ENCODE measurements at regions of chr16 and their contacts with region 1.

Region 1: DNA sequence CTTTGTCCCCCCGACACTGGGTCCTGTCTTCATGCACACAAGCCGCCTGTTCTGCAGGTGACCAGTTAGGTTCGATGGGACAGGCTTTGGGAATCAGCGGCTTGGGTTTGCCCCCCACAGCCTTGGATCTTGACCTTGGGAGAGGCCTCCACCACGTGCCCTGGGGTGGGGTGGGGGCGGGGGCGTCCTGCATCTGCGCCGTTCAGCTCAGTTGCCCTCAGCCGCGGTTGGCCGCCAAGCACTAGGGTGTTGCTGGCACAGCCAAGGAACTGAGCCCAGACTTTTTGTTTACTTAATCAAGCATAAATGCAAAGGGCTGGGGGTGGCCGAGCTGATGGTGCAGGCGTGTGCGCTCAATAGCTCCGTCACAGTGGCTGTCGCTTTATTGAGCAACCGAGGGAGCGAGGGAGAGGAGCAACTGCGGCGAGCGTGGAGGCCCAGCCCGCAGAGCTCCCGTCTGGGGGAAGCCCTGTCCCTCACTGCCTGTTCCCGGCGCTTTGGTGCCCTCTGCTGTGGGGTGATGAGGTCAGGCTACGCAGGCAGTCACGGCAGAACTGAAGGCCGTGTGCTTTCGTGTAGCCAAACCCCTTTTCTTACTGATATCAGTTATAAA is 33.9 kb downstream of the JPH3 start:
- DNase-seq: peak; percentile 93
- ATAC-seq: peak; percentile 93
- H3K4me3 Mint-ChIP-seq: peak overlapping the region; percentile 55
- H3K27ac Mint-ChIP-seq: no peak overlapping the region
- H3K4me1 Mint-ChIP-seq: peaks cover 12% of the 10 kb centered on the region
- H3K27me3 Mint-ChIP-seq: peaks cover 10% of the 10 kb centered on the region

Region 2: DNA sequence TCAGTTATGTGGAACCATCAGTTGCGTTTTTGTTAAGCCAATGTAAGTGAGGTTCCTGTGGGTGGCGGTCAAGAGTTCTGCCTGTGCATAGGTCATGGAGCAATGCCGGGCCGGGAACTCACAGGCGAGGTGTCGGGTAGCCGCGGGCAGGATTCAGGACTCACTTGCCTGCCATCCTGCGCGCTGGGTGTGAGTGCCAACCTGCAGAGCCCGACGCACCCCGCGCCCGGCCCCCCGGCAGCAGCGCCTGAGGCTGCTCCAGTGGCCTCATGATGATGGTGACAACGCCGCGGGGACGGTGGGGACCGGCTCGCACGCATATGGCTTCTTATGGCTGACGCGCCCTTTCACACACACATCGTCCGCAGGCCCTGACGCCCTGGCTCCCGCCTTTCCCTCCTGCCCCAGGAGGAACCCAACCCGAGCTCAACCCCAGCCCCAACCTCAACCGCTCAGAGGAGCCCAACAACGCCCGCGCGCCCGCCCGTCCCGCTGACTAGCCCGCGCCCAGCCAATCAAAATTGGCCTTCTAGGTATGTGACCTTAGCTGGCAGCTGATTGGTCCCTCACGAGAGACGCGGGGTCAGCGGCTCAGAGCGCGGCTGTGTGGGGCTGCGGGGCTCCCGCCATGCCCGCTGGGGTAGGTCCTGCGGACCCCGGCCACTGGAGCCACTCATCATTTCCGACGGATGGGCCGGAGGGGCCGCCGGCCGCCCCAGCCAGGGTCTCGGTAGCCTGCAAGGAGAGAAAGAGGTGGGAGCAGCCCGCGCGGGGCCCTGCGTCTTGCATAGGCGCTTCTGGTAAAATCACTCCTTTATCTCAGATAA is 319.0 kb before region 1 on chr16 and contains the start of gene C16orf95:
- CTCF ChIA-PET with region 1: interaction called, 3 read pairs
- POLR2A ChIA-PET with region 1: no interaction called
- intact Hi-C with region 1: loop called in 1 of 2 experiments (anchors 2 kb)
- DNase-seq: peak; percentile 97
- ATAC-seq: peak; percentile 90
- H3K4me3 Mint-ChIP-seq: peak within 1 kb of the TSS; percentile 97
- H3K27ac Mint-ChIP-seq: peak within 1 kb of the TSS; percentile 95
- H3K4me1 Mint-ChIP-seq: peaks cover 11% of the 10 kb centered on the region
- H3K27me3 Mint-ChIP-seq: no peaks in the 10 kb centered on the region
- total RNA-seq, gene C16orf95: 5.6 to 12.8 TPM

Region 3: DNA sequence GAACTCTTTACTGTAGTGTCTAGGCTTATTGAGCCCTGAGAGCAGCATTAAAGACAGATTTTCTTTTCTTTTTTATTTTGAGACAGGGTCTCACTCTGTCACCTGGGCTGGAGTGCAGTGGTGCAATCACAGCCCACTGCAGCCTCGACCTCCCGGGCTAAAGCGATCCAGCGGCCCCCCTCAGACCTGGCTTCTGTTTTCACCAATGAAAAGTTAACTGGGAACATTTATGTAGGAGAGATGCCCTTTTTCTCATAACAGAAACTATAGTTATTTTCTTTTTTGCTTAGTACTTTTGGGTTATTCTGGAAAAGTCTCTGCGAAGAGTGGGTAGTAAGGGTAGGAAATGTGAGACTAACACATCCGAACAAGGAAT is 242.5 kb before region 1 on chr16:
- CTCF ChIA-PET with region 1: interaction called, 12 read pairs
- POLR2A ChIA-PET with region 1: interaction called, 3 read pairs
- intact Hi-C with region 1: loop called (anchors 1 to 5 kb)
- DNase-seq: no peak
- ATAC-seq: no peak
- H3K4me3 Mint-ChIP-seq: peak overlapping the region; percentile 83
- H3K27ac Mint-ChIP-seq: peak overlapping the region; percentile 81
- H3K4me1 Mint-ChIP-seq: peaks cover 43% of the 10 kb centered on the region
- H3K27me3 Mint-ChIP-seq: no peaks in the 10 kb centered on the region

Region 4: GRCh38 chr16:87550496-87550961 is 85.6 kb before region 1 on chr16:
- CTCF ChIA-PET with region 1: interaction called, 6 read pairs
- POLR2A ChIA-PET with region 1: no interaction called
- intact Hi-C with region 1: loop called (anchors 1 to 2 kb)
- DNase-seq: peak; percentile 77
- ATAC-seq: peak; percentile 39
- H3K4me3 Mint-ChIP-seq: no peak overlapping the region
- H3K27ac Mint-ChIP-seq: no peak overlapping the region
- H3K4me1 Mint-ChIP-seq: no peaks in the 10 kb centered on the region
- H3K27me3 Mint-ChIP-seq: peaks cover 15% of the 10 kb centered on the region

Region 5: DNA sequence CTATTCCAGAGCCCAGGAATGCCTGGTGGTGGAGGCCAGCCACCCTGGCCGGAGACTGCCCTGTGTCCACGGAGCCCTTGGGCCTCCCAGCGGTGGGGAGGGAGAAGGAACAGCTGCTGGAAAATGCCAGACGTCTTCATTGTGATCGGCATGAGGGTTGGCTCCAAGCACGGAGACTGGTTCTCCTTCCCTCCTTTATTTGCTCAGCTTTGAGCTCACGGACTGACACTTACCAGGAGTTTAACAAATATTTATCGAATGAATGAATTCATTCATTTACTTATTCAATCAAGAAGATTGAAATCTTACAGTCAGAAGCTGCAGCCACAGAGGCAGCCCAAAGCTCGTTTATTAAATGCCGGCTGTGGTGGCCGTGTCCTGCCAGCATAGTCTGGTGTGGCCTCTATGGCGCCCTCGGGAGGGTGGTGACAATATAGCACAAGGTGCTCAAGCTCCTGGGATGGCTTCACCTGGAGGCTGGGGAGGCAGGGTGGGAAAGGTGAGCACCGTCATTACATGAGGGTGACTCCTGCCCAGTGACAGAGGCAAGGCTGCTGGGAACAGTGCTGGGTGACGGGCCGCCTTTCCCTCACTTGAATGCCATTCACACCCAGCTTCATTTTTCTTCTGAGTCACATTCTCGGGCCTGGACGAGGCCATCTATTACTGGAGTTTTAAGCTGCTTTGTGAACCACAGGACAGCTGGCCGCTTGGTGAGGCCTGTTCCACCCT is 64.9 kb before region 1 on chr16:
- CTCF ChIA-PET with region 1: interaction called, 12 read pairs
- POLR2A ChIA-PET with region 1: no interaction called
- intact Hi-C with region 1: no loop called
- DNase-seq: peak; percentile 62
- ATAC-seq: peak; percentile 42
- H3K4me3 Mint-ChIP-seq: no peak overlapping the region
- H3K27ac Mint-ChIP-seq: no peak overlapping the region
- H3K4me1 Mint-ChIP-seq: no peaks in the 10 kb centered on the region
- H3K27me3 Mint-ChIP-seq: peaks cover 7% of the 10 kb centered on the region

Region 6: GRCh38 chr16:87587636-87588035 is 48.5 kb before region 1 on chr16:
- CTCF ChIA-PET with region 1: interaction called, 12 read pairs
- POLR2A ChIA-PET with region 1: no interaction called
- intact Hi-C with region 1: loop called (anchors 1 to 5 kb)
- DNase-seq: no peak
- ATAC-seq: no peak
- H3K4me3 Mint-ChIP-seq: no peak overlapping the region
- H3K27ac Mint-ChIP-seq: no peak overlapping the region
- H3K4me1 Mint-ChIP-seq: no peaks in the 10 kb centered on the region
- H3K27me3 Mint-ChIP-seq: peaks cover 32% of the 10 kb centered on the region

Measured in activated CD4-positive, alpha-beta T cell treated with anti-CD3 and anti-CD28 coated beads for 36 hours (primary cell).